PC-9 (cell line): ENCODE measurements at regions of chr3 and their contacts with region 1.

Region 1: GRCh38 chr3:56887402-56888025 is 85.8 kb upstream of the ARHGEF3 start:
- DNase-seq: no peak
- H3K4me3 ChIP-seq: no peak overlapping the region
- H3K27ac ChIP-seq: no peak overlapping the region
- H3K4me1 ChIP-seq: no peaks in the 10 kb centered on the region
- H3K27me3 ChIP-seq: no peaks in the 10 kb centered on the region
- CTCF ChIP-seq: no peak

Region 2: DNA sequence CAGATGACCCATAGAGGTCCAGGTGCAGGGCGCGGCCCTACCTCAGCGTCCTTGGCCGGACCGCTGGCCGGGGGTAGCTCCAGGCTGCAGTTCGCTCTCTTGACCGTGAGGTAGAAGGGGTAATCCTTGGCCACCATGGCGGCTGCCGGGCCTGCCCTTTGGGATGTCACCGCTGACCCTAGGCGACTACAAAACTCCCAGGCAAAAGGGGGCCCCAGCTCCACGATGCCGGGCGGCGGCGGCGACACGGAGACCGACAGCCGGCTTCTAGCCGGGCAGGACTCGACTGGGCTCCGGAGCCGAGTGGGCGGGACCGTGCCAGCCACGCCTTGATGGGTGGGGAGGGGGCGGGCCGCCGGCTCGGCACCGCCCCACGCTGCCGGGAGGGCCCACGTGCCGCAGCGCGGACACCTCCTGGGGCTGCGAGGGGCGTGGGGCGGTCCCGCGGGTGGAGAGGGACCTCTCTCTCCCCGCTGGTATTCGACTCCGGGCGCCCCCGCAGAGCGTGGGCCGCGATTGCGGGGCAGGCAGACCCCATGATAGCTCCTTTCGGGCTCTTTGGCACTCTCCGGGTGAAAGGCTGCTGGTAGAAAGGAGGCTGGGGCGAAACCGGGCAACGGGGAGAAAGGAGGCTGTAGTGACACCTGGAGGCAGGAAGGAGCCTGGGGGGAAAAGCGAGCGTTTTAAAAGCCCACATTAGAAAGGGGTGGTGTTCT is 85.7 kb before region 1 on chr3 and contains the start of gene ARHGEF3:
- CTCF ChIA-PET with region 1: no interaction called
- POLR2A ChIA-PET with region 1: no interaction called
- intact Hi-C with region 1: no loop called
- DNase-seq: peak; percentile 60 to 76
- H3K4me3 ChIP-seq: peak within 1 kb of the TSS; percentile 67
- H3K27ac ChIP-seq: peak within 1 kb of the TSS; percentile 43
- H3K4me1 ChIP-seq: peaks cover 17% of the 10 kb centered on the region
- H3K27me3 ChIP-seq: no peaks in the 10 kb centered on the region
- CTCF ChIP-seq: peak; percentile 53; the same call in 1 of the 2 replicates
- total RNA-seq, gene ARHGEF3: 44.6 and 49.2 TPM in 2 replicates

Region 3: DNA sequence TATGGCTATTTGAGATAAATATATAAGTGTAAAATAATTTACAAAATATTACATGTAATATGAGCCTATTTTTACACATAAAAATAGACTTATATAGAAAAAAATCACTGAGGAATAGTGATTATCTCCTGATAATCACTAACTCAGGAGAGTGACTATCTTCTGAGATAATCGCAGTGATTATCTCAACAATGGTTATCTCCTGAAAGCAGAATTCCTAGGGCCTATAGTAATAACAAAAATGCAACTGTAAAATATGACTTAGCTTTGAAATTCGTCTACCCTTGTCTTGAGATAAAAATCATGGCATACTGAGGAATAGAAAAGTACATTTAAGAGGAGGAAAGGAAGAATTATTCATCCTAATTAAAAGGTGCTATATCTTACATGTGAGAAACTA is 521.9 kb after region 1 on chr3:
- CTCF ChIA-PET with region 1: no interaction called
- POLR2A ChIA-PET with region 1: no interaction called
- intact Hi-C with region 1: no loop called
- DNase-seq: no peak
- H3K4me3 ChIP-seq: no peak overlapping the region
- H3K27ac ChIP-seq: no peak overlapping the region
- H3K4me1 ChIP-seq: no peaks in the 10 kb centered on the region
- H3K27me3 ChIP-seq: no peaks in the 10 kb centered on the region
- CTCF ChIP-seq: no peak

Region 4: DNA sequence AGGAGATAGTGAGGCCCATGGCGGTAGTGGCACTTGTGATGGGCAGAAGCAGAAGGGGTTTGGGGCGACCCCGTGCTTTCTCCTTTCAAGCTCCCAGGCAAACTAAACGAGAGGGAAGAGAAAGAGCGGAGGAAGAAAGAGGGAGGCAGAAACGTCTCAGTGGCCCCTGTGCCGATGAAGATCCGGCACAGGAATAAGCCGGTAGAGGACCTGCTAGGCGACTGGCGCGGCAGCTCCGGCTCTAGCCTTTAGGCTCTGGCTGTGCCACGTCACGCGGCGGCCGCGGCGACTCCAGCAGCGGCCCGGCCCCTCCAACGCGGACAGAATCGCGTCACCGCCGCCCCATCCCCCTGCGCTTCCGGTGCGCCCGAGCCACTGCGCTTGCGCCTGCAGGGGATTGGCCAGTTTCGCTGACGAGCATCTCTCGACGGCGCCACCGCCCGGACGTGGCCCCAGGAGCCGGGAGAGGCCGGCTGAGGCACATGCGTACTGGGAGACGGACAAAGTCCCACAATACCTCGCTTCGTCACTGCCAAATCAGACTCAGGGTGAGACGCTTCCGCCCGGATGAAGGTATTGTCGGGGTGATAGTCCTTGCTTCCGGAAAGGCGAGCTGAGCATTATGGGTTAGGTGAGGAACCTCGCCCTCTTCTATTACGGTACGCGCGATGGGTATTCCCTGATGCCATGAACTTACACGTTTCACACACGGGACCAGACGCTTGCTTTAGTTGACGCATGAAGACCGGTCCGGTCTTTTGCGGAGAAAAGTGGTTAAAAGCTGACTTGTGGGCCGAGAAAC is 709.8 kb after region 1 on chr3 and contains the start of gene ARF4:
- CTCF ChIA-PET with region 1: no interaction called
- POLR2A ChIA-PET with region 1: interaction called, 12 read pairs
- intact Hi-C with region 1: no loop called
- DNase-seq: peak; percentile 97 to 99
- H3K4me3 ChIP-seq: peak within 1 kb of the TSS; percentile 80
- H3K27ac ChIP-seq: peak within 1 kb of the TSS; percentile 97
- H3K4me1 ChIP-seq: peaks cover 36% of the 10 kb centered on the region
- H3K27me3 ChIP-seq: no peaks in the 10 kb centered on the region
- CTCF ChIP-seq: no peak; the same call in 1 of the 2 replicates
- total RNA-seq, gene ARF4: 132 and 182 TPM in 2 replicates